ENCODE measurements at regions of chr1 and their contacts with region 1.

Region 1: DNA sequence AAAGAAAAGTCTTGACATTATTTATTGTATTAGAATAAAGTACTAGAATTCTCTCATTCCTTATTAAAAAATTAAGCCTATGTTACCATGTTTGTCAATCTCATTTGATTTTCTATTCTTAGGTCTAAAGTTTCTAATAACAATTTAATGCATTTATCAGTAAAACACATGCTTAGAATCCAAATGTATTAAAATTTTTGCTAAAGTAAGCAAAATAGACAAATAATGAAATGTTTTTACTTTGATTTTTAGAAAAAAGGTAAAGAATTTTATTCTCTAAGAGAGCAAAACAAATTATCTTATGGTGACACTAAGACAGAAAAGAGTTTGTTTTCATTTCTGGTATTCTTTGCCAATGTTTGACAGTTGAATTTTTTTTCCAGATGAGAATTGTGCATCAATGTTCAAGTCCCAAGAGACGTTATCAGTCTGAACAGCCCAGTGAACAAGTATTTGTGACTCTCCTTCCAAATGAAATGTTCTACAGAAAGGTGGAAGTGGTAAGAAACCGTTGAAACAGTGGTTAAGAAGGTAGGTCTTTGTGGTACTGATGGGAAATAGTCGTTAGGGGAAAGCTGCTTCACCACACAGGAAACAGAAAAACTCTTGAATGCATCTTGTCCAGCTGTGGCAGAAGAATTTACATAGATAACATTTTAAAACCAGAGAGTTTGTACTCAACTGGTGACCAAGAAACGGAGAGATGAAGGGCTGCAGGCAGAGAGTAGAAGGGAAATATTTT is 402.5 kb downstream of the PTPRC start:
- DNase-seq: peak; percentile 57
- H3K4me3 Mint-ChIP-seq: peak overlapping the region; percentile 51
- H3K27ac Mint-ChIP-seq: peak overlapping the region; percentile 71
- H3K4me1 Mint-ChIP-seq: peaks cover 44% of the 10 kb centered on the region
- H3K27me3 Mint-ChIP-seq: no peaks in the 10 kb centered on the region

Region 2: GRCh38 chr1:198880818-198881597 is 160.3 kb before region 1 on chr1:
- intact Hi-C with region 1: loop called (anchors 1 kb)
- DNase-seq: no peak
- H3K4me3 Mint-ChIP-seq: no peak overlapping the region
- H3K27ac Mint-ChIP-seq: peak overlapping the region; percentile 49
- H3K4me1 Mint-ChIP-seq: peaks cover 42% of the 10 kb centered on the region
- H3K27me3 Mint-ChIP-seq: no peaks in the 10 kb centered on the region

Region 3: DNA sequence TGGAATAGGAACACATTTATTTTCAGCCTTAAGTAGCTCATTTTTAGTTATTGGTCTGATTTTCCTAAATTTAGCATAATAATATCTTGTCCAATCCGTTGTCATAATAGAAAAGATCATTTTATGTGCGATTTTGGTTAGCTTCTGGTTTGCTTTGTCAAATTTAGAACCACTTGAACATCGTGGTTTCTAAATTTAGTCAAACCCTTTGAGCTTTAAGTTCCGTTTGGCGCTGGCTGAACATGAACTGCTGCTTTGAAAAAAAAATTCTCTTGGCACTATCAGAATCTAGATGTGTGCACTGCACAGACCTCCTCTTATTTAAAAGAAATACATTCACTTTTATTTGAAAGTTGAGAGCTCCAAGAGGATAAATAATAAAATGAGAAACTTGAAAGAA is 31.9 kb before region 1 on chr1:
- intact Hi-C with region 1: loop called (anchors 2 kb)
- DNase-seq: no peak
- H3K4me3 Mint-ChIP-seq: peak overlapping the region; percentile 35
- H3K27ac Mint-ChIP-seq: peak overlapping the region; percentile 64
- H3K4me1 Mint-ChIP-seq: peaks cover 47% of the 10 kb centered on the region
- H3K27me3 Mint-ChIP-seq: no peaks in the 10 kb centered on the region

Region 4: DNA sequence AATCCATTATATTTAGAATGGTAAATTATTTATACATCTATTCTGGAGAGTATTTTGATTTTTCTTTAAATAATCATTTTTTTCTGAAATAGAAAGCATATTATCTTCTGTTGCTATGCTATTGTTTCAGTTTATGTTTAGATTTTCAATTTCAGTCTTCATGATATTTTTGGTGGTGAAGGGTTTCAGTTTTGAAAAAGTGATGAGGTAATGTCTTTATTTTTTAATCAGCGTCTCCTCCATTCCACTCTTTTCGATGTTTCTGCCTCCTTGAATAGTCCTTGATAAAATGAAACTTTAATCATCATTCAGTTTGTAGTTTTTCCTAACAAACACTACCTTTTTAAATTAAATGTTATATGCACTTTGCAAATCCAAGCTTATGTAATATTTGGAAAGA is 26.1 kb after region 1 on chr1:
- intact Hi-C with region 1: loop called (anchors 1 kb)
- DNase-seq: no peak
- H3K4me3 Mint-ChIP-seq: no peak overlapping the region
- H3K27ac Mint-ChIP-seq: no peak overlapping the region
- H3K4me1 Mint-ChIP-seq: peaks cover 30% of the 10 kb centered on the region
- H3K27me3 Mint-ChIP-seq: no peaks in the 10 kb centered on the region